ENCODE measurements at regions of chr9 and their contacts with region 1.

Region 1: GRCh38 chr9:278651-279050 is 64.0 kb downstream of the DOCK8 start:
- DNase-seq: peak; percentile 86
- H3K4me3 Mint-ChIP-seq: no peak overlapping the region
- H3K27ac Mint-ChIP-seq: no peak overlapping the region
- H3K4me1 Mint-ChIP-seq: peaks cover 30% of the 10 kb centered on the region
- H3K27me3 Mint-ChIP-seq: no peaks in the 10 kb centered on the region

Region 2: DNA sequence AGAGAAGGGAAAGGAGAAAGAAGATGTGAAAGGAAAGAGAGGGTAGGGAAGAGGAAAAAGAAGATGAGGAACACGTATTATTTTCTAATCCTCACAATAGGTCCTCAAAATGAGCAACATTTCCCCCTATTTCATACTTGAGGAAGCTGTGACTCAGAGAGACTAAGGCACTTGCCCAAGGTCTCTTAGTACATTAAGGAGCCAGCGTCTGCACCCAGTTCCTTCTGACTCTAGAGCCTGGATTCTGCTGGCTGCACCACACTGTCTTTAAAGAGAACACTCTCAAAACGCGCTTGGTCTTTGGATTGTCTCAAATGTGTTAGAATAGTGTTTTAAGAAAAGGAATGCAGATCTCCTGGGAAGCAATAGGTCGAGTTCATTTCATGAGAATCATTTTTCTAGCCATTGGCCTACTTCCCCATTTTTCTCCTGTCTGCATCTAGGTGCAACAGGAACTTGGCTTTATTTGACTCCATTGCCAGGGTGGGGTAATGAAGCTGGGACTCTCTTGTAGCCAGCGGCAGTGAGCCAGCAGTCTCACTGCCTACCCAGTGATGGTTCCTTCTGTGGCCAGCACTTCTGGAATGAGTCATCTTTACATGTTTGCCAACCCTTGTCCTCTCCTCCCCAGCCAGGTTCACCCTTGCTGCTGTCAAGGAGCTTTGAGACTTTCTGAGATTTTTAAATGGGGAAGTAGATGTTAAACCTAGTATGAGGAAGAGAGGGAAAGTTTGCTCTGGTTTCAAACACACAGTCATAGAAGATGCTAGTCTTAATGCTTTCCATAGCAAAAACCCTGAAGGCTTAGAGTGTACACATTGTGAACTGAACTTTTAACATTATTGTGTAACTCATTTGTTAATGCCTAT is 18.7 kb after region 1 on chr9:
- intact Hi-C with region 1: loop called (anchors 2 kb)
- DNase-seq: no peak
- H3K4me3 Mint-ChIP-seq: peak overlapping the region; percentile 26
- H3K27ac Mint-ChIP-seq: peak overlapping the region; percentile 49
- H3K4me1 Mint-ChIP-seq: peaks cover 40% of the 10 kb centered on the region
- H3K27me3 Mint-ChIP-seq: no peaks in the 10 kb centered on the region